Prostate gland (tissue), 2 donors: ENCODE measurements at regions of chr1 and their contacts with region 1.

Region 1: DNA sequence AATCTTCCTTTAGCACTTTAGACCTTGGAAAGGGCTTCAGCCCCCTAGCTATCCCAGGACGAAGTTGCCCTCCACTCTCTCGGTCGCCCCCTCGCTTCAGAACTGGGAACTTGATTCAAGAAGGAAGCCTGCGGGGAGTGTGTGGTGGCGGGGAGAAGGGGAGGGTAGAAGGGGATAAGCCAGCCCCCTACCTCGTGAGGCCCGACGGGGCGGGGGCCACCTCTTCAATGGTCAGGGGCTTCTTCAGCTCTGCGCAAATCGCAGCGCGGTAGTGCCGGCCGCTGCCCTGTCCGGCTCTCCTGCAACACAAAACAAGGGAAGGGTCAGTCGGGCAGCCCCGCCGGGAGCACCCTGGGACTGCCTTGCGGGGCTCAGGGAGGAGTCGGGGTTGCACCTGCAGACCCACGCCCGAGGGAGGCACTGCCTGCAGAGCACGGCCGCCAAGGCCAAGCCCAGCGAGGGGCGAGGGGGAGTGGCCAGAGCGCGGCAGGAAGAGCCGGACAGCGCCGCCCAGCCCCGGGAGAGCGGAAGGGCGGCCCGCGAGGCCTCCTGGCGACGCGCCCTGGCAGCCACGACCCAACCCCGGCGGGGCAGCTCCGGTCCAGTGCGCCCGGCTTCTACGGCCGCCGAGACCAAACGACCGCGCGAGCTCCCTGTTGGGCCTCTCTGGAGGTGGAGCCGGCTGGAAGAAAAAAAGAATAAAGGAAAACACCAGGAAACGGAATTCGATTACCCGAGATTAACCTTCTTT is 56.2 kb upstream of the RASAL2 start:
- DNase-seq: peak; percentile 48
- H3K4me3 ChIP-seq: peak overlapping the region; percentile 41 to 54
- H3K27ac ChIP-seq: peak overlapping the region; percentile 7 to 61
- H3K4me1 ChIP-seq: no peaks in the 10 kb centered on the region
- H3K27me3 ChIP-seq: no peaks in the 10 kb centered on the region
- CTCF ChIP-seq: peak in 3 of 4 experiments; percentile 16 to 36 (median 33)
- POLR2A ChIP-seq: no peak

Region 2: DNA sequence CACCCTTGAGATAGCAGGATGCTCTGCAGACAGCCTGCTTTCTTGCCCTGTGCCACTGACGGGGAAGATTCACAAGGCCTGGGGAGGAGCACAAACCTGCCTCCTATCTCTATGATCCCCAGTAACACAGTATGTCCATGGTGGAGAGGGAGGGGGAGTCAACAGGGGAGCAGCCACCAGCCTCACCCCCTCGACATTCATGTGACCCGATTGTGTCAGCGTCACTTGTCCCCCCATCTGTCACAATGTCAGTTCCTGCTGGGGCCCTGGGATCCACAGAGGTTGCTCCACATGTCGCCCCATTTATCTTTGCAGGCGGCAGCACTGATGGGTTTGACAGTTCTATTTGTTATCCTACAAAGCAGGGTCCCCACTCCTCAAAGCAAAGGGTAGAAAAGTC is 198.8 kb before region 1 on chr1:
- intact Hi-C with region 1: no loop called
- DNase-seq: no peak
- H3K4me3 ChIP-seq: no peak overlapping the region
- H3K27ac ChIP-seq: no peak overlapping the region
- H3K4me1 ChIP-seq: no peaks in the 10 kb centered on the region
- H3K27me3 ChIP-seq: no peaks in the 10 kb centered on the region
- CTCF ChIP-seq: no peak
- POLR2A ChIP-seq: no peak

Region 3: DNA sequence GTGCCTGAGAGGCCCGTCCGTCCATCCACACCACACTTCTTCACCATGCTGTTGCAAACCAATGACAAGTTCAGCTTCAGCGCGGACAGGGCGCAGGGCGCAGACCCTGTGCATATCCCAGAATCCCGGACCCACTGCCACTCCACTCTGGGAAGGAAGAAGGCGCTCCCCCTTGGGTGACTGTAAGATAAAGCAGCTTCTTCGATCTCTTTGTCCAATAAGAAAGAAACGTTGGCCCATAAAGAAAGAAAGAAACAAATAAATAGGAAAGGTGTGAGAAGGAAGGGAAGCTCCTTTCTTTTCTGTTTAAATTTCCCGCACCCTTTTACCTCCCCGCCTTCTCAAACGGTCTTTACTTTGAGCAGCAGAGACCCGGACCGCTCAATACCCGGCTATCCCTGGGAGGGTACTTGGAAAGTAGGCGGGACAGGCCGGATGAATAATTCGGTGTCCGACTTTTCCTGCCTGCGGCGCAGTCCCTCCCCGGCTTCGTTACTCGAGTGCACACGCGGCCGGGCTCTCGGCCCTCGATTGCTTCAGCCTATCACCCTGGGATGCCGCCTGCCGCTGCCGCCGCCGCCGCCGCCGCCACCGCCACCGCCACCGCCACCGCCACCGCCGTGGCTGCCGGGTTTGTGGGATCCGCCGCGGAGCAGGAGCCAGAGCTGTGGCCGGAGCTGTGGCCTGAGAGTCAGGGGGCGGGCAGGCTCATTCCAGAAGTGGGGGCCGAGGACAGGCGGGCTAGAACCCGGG is 55.7 kb after region 1 on chr1:
- intact Hi-C with region 1: loop called (anchors 5 kb)
- DNase-seq: peak; percentile 87
- H3K4me3 ChIP-seq: peak overlapping the region; percentile 84 to 95
- H3K27ac ChIP-seq: peak overlapping the region; percentile 85 to 88
- H3K4me1 ChIP-seq: no peaks in the 10 kb centered on the region
- H3K27me3 ChIP-seq: no peaks in the 10 kb centered on the region
- CTCF ChIP-seq: peak in 1 of 4 experiments; percentile 7
- POLR2A ChIP-seq: no peak